Psoas muscle (tissue), 8 donors: ENCODE measurements at regions of chr4 and their contacts with region 1.

Region 1: GRCh38 chr4:40976343-40976742 is 226.6 kb downstream of the NSUN7 start:
- DNase-seq: no peak
- ATAC-seq: peak in 2 of 4 donors; percentile 57 to 62
- H3K4me3 ChIP-seq: no peak overlapping the region
- H3K27ac ChIP-seq: no peak overlapping the region
- H3K4me1 ChIP-seq: no peaks in the 10 kb centered on the region
- H3K27me3 ChIP-seq: no peaks in the 10 kb centered on the region
- CTCF ChIP-seq: peak; percentile 64

Region 2: DNA sequence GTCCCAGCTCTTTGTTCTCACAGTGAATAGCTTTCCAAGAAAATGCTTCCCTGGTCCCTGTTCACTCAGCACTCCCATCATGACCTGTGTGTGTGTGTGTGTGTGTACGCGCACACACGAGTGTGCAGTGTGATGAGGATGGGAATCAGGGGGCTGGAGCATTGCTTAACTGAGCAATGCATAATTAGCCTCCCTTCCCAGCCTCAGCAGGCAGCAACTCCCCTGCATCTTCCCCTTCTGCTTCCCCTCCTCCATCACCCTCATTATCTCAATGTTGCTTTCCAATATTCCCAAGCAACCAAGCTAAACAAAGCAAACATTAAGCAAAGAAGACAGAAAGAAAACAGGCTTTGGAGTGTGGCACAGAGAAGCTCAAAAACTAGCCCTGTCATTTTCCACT is 483.7 kb before region 1 on chr4:
- intact Hi-C with region 1: no loop called
- DNase-seq: no peak
- ATAC-seq: no peak
- H3K4me3 ChIP-seq: no peak overlapping the region
- H3K27ac ChIP-seq: no peak overlapping the region
- H3K4me1 ChIP-seq: no peaks in the 10 kb centered on the region
- H3K27me3 ChIP-seq: peaks cover 0 to 3% (median 0%) of the 10 kb centered on the region in 3 donors
- CTCF ChIP-seq: no peak

Region 3: DNA sequence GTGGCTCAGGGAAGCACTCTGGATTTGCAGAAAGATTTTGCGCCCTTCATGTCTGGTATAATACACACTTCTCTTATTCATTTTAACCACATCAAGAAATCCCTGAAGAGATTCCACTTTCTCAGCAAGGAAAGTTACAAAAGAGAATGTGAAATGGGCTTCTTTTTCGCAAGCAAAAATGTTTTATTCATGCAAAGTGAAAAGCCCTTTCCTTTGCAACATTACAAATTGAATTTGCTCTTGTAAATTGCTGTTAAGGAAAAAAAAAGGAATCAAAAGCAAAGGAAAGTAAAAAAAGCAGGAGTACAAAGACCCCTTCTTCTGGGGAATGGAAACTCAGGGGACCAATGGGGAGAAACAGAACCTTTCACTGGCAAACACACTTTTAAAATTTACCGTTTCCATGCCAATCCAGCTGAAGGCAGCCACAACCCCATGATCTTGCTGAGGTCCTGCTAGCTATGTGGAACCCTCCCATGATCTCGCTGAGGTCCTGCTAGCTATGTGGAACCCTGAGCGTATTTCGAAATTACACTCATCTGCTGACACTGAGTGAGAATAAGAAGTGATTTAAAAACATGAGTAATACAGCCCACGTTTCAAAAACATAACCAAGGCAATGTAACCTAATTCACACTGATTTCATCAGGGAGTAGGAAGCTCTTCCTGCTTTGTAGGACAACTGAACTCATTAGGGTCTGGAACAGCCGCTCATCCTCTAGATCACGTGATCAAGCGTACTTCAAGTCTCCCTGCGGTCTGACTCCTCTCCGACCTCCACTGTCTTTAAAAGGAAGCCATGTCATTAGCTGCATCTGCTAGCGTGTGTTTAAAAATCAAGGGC is 88.8 kb before region 1 on chr4:
- intact Hi-C with region 1: no loop called
- DNase-seq: no peak
- ATAC-seq: peak; percentile 47 to 72 (median 66)
- H3K4me3 ChIP-seq: no peak overlapping the region
- H3K27ac ChIP-seq: no peak overlapping the region
- H3K4me1 ChIP-seq: no peaks in the 10 kb centered on the region
- H3K27me3 ChIP-seq: no peaks in the 10 kb centered on the region
- CTCF ChIP-seq: no peak

Region 4: GRCh38 chr4:40924793-40925117 is 51.6 kb before region 1 on chr4:
- intact Hi-C with region 1: loop called in 1 of 2 experiments (anchors 5 kb)
- DNase-seq: no peak
- ATAC-seq: no peak
- H3K4me3 ChIP-seq: no peak overlapping the region
- H3K27ac ChIP-seq: no peak overlapping the region
- H3K4me1 ChIP-seq: peaks cover 5% of the 10 kb centered on the region
- H3K27me3 ChIP-seq: no peaks in the 10 kb centered on the region
- CTCF ChIP-seq: no peak

Region 5: DNA sequence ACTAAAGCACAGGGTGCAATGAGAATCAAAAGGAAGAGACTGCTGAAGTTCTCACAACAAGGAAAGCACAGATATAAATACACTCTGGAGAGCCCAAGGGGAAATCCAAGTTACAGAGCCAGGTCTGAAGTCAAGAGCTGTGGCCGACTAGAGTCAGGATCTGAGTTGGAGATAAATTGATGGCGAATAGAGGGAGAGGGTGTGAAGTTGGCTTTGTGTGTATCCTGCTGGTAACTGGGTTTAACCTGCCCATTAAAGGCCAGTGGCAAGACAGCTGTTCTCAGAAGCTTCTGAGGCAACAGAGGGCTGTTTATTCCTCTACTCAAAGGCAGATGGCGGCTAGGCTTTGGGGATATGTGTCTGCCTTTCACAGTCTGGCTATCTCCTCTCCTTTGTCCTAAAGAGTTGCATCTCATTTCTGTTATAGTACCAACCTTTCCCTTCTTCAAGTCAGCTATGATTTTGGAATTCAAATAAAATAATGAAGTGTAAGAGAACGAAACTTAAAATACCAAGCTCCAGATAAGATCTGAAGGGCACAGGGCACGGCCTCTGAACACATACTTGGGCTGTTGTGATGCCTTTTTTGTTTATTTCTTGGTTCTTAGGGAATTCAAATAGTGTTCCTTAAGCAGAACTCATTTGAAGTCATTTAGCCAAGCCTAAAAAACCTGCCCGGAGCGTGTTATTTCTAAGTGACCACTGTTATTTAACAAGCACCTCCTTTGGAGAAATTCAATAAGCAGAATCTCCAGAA is 95.9 kb after region 1 on chr4:
- intact Hi-C with region 1: no loop called
- DNase-seq: no peak
- ATAC-seq: peak in 1 of 4 donors; percentile 65
- H3K4me3 ChIP-seq: no peak overlapping the region
- H3K27ac ChIP-seq: no peak overlapping the region
- H3K4me1 ChIP-seq: no peaks in the 10 kb centered on the region
- H3K27me3 ChIP-seq: peaks cover 0 to 4% (median 0%) of the 10 kb centered on the region in 3 donors
- CTCF ChIP-seq: no peak

Region 6: DNA sequence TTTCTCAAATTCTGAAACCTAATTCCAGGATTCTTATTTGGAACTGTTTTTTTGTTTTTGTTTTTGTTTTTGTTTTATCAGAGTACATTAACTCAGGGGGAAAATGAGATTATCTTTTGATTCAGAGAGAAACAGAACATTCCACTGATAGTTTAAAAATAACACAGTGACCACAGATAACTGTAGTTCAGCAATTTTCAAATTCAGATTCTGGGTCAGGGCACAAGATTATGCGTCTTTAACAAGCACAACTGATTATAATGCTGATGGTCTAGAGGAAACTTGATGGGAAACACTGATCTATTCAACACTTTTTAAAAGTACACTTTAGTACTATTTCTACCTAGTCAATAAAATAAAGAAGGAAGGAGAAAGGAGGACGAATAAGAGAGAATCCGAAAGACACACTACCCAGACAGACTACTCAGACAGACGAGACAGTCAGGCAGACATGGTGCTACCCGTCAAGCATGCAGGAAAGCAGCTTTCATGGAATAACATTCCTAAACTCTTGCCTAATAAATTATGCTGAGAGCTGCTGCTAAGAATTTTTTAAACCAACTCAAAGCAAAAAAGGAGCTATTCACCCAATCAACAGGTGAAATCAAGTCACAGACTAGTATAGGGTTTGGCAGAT is 179.0 kb after region 1 on chr4:
- intact Hi-C with region 1: no loop called
- DNase-seq: no peak
- ATAC-seq: peak in 2 of 4 donors; percentile 67
- H3K4me3 ChIP-seq: peak overlapping the region; percentile 1
- H3K27ac ChIP-seq: peak overlapping the region; percentile 13
- H3K4me1 ChIP-seq: peaks cover 6% of the 10 kb centered on the region
- H3K27me3 ChIP-seq: no peaks in the 10 kb centered on the region
- CTCF ChIP-seq: no peak